WTC11 (cell line): ENCODE measurements at regions of chrX and their contacts with region 1.

Region 1: DNA sequence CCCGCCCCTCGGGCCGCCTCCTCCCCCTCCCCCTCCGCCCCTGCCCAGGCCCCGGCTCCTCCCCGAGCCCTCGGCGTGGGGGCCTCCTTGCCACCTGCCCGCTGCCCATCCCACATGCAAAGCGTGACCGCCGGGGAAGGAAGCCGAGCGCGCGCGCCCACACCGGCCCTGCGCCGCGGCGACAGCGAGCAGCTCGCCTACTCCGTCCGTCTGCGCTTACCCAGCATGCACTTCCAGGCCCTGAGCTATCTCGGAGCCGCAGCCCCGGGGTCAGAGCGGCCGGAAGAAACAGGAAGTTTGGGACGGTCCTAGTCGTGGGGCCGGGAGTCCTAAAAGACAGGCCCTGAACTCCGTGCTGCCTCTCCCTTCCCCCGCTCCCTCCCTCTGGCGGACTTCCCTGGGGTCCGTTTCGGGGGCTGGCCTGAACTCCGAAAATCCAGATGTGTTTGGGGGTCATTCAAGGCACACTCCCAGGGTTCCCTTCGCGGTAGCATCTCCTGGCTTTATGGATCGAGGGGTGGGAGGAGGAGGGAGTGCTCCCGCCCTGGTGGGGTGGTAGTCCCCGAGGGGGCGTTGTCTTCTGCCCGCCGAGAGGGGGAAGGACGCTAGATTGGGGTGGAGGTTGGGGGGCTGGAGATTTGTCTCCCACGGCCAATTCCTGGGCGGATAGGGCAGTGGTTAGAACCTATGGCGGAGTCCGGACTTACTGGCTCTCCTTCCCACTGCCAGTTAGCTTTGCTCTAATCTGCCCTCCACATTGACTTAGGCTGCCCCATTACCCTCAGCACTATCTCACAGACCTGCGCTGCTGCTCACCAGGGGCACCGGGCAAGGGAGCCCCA is 25.0 kb upstream of the BCORL1 start:
- DNase-seq: peak; percentile 64
- ATAC-seq: peak; percentile 50
- H3K4me3 Mint-ChIP-seq: peak overlapping the region; percentile 66
- H3K27ac Mint-ChIP-seq: no peak overlapping the region
- H3K4me1 Mint-ChIP-seq: peaks cover 45% of the 10 kb centered on the region
- H3K27me3 Mint-ChIP-seq: peaks cover 93% of the 10 kb centered on the region
- CTCF ChIP-seq: no peak

Region 2: DNA sequence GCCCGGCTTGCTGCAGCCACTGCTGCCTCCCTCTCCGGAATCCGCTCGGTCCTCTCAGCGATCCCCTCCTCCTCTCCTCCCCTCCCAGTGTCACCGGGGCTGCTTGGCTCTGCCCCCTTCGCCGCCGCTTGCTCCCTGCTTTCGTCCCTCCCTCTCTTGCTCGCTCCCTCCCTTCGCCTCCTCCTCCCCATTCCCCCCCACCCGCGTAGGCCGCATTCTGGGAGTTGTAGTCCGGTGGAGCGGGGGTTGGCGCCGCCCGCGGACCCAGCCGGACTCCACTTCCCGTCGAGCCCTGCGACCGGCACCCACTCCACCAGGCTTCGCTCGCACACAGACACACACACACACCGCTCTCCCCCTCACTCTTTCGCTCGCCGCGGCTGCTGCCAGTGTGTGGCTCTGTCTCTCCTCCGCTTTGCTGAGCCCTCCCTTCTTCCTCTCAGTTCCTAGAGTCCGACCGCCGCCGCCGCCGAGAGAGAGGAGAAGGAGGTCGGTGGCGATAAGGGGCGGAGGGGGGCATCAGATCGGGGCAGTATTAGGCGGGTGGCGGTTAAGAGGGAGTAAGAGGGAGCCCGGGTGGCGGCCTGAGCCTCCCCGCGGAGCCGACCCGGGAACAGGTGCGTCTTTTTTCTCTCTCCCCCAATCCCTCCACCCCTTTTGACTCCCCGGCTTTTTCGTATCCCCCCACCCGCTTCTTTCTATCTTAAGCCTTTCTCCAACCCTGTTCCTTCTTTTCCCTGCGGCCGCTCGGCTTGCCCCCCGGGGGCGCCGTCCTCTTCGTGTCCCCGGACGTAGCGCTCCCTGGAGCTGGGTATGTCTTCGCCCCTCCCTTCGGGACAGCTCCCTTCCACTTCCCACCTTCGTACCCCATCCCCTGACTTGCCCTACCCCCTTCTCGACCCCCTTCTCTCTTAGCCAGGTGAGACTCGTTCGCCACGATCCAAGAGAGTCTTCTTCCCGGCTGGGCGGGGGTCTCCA is 25.1 kb after region 1 on chrX and contains the start of gene BCORL1:
- CTCF ChIA-PET with region 1: interaction called, 9 read pairs
- POLR2A ChIA-PET with region 1: interaction called, 13 read pairs
- DNase-seq: peak; percentile 83
- ATAC-seq: peak; percentile 73
- H3K4me3 Mint-ChIP-seq: no peak within 1 kb of the TSS; the same call in 1 of the 2 replicates
- H3K27ac Mint-ChIP-seq: no peak within 1 kb of the TSS
- H3K4me1 Mint-ChIP-seq: peaks cover 12% of the 10 kb centered on the region
- H3K27me3 Mint-ChIP-seq: peaks cover 62% of the 10 kb centered on the region
- CTCF ChIP-seq: no peak
- total RNA-seq, gene BCORL1: 9.3 to 12.0 TPM (median 9.6 TPM) in 3 replicates